ENCODE measurements at regions of chr6 and their contacts with region 1.

Region 1: DNA sequence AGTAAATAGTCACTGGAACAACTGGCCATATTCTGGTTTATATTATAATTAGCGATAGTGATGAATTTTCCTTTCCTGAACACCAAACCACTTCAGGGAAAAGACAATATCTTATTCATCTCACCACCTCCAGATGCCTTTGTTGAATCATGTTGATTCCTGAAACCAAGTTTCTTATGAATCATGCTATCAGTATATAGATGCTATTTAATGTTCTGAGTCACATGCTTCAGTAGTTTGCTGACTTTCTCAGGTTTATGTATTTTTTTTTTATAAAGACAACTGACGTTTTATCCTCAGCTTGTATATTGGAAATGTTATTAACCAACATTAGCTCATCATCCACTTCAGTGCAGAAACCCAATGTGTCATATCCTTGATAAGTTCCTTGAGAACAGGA is 710.2 kb upstream of the POU3F2 start:
- DNase-seq: no peak
- H3K4me3 Mint-ChIP-seq: no peak overlapping the region
- H3K27ac Mint-ChIP-seq: no peak overlapping the region
- H3K4me1 Mint-ChIP-seq: no peaks in the 10 kb centered on the region
- H3K27me3 Mint-ChIP-seq: no peaks in the 10 kb centered on the region

Region 2: GRCh38 chr6:97669191-97670031 is 454.8 kb before region 1 on chr6:
- intact Hi-C with region 1: loop called (anchors 5 kb)
- DNase-seq: peak; percentile 14
- H3K4me3 Mint-ChIP-seq: no peak overlapping the region
- H3K27ac Mint-ChIP-seq: no peak overlapping the region
- H3K4me1 Mint-ChIP-seq: peaks cover 6% of the 10 kb centered on the region
- H3K27me3 Mint-ChIP-seq: peaks cover 8% of the 10 kb centered on the region

Region 3: GRCh38 chr6:98067375-98067774 is 56.8 kb before region 1 on chr6:
- intact Hi-C with region 1: no loop called
- DNase-seq: no peak
- H3K4me3 Mint-ChIP-seq: no peak overlapping the region
- H3K27ac Mint-ChIP-seq: no peak overlapping the region
- H3K4me1 Mint-ChIP-seq: no peaks in the 10 kb centered on the region
- H3K27me3 Mint-ChIP-seq: no peaks in the 10 kb centered on the region